ENCODE measurements at regions of chr1 and their contacts with region 1.

Region 1: DNA sequence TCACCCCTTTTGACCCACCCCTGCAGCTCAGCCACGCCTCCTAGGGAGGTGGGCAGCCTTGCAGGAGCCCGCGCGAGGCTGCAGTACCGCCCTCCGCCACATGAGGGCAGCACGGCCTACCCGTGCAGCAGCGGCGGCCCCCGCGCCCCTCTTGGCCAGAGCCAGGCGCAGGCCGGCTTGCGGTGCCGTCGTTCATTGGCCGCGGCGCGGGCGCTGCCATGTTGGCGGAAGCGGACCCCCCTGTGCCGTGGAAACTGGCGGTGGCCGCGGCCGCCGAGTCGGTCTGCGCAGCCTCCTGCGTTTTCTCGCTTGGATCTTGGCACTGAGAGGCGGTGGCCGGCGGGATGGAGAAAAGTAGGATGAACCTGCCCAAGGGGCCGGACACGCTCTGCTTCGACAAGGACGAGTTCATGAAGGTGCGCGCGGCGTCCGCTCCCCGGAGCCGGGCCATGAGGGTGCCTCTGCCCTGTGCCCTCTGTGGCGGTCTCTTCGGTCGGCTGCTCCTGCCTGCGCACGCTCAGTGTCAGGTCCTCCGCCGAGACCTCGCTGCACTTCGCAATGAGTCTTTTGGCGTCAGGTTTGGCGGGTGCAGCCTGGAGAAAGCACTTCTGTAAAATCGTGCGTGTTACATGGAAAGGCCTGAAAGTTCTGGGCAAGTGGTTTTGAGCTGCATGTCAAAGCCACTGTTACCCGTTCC is at the start of gene COG2:
- DNase-seq: peak; percentile 93
- H3K4me3 Mint-ChIP-seq: peak within 1 kb of the TSS; percentile 96
- H3K27ac Mint-ChIP-seq: peak within 1 kb of the TSS; percentile 95
- H3K4me1 Mint-ChIP-seq: peaks cover 35% of the 10 kb centered on the region
- H3K27me3 Mint-ChIP-seq: peaks cover 12% of the 10 kb centered on the region
- total RNA-seq, gene COG2: 46.3 and 46.4 TPM in 2 replicates

Region 2: GRCh38 chr1:229558571-229559335 is 1083.7 kb before region 1 on chr1 and contains the start of gene ABCB10:
- intact Hi-C with region 1: loop called (anchors 5 kb)
- DNase-seq: peak; percentile 81
- H3K4me3 Mint-ChIP-seq: peak within 1 kb of the TSS; percentile 90
- H3K27ac Mint-ChIP-seq: peak within 1 kb of the TSS; percentile 83
- H3K4me1 Mint-ChIP-seq: peaks cover 49% of the 10 kb centered on the region
- H3K27me3 Mint-ChIP-seq: no peaks in the 10 kb centered on the region
- total RNA-seq, gene ABCB10: 46.2 and 47.0 TPM in 2 replicates

Region 3: GRCh38 chr1:230426246-230427093 is 215.9 kb before region 1 on chr1 and contains the start of gene PGBD5:
- intact Hi-C with region 1: loop called (anchors 5 kb)
- DNase-seq: peak; percentile 59
- H3K4me3 Mint-ChIP-seq: peak within 1 kb of the TSS; percentile 78
- H3K27ac Mint-ChIP-seq: peak within 1 kb of the TSS; percentile 40
- H3K4me1 Mint-ChIP-seq: peaks cover 9% of the 10 kb centered on the region
- H3K27me3 Mint-ChIP-seq: peaks cover 53% of the 10 kb centered on the region
- total RNA-seq, gene PGBD5: not detected in 2 replicates

Region 4: DNA sequence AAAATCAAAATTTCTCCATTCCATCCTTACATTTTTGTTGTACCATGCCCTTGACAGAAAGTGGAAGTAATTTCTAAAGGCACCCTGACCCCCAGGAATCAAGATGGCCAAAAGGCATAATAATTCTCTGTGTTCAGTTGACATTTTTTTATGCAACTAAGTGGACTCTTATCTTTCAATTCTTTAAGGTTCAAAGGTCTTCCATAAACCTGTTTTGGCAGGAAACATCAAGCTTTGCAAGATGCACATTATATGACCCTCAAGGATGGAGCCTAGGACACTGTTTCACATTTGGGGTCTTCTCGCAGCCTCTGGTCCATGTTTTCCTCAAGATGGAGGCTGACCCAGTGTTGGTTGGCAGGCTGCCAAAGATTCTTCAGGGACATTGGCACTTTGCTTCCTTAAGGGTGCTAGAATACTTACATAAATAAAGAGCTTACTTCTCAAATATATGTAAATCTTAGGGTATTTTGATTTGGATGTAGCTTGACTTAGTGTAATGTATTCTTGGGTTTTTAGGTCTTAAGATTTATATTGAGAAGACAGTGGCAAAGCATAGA is 48.1 kb before region 1 on chr1:
- intact Hi-C with region 1: no loop called
- DNase-seq: no peak
- H3K4me3 Mint-ChIP-seq: no peak overlapping the region
- H3K27ac Mint-ChIP-seq: no peak overlapping the region
- H3K4me1 Mint-ChIP-seq: no peaks in the 10 kb centered on the region
- H3K27me3 Mint-ChIP-seq: no peaks in the 10 kb centered on the region

Region 5: DNA sequence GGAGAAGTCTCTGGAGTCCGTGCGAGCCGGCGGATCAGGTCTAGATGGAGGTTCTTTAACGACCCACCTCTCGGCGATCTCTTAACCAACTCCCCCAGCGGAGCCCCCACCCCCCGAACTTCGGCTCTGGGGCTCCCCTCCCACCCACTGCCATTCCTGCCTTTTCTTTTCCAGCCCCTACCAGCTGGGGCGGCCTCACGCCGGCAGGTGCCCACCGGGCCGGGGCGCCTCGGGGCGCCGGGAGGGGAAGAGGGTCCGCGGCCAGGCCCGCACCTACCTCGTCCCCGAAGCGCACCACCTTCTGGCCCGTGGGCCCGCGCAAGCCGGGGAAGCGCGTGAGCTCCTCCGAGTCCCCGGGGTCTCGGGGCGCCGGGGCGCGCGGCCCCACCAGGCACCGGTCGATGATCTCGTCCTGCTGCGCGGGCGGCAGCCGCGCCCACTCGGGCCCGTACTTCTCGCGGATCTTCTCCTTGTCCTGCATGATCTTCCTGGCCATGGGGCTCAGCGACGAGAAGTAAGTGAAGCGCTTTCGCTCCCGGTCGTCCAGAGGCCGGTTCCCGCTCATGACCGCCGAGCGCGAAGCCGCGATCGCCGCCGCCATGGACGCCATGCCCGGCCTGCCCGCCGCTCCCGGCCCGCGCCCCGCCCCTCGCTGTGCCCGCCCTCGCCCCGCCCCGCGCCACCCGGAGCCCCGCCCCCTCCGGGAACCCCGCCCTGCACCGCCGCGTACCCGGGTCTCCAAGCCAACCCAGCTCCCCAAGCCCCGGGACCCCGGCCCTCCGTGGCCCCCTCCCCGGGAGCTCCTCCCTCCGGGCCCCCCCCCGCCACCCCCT is 225.7 kb after region 1 on chr1 and contains the start of gene C1orf198:
- intact Hi-C with region 1: loop called (anchors 2 kb)
- DNase-seq: peak; percentile 59
- H3K4me3 Mint-ChIP-seq: peak within 1 kb of the TSS; percentile 87
- H3K27ac Mint-ChIP-seq: peak within 1 kb of the TSS; percentile 80
- H3K4me1 Mint-ChIP-seq: peaks cover 28% of the 10 kb centered on the region
- H3K27me3 Mint-ChIP-seq: peaks cover 39% of the 10 kb centered on the region
- total RNA-seq, gene C1orf198: 14.1 and 14.6 TPM in 2 replicates

Region 6: GRCh38 chr1:230978491-230979388 is 336.3 kb after region 1 on chr1 and contains the starts of genes ARV1 and TTC13:
- intact Hi-C with region 1: loop called (anchors 1 kb)
- DNase-seq: peak; percentile 97
- H3K4me3 Mint-ChIP-seq: peak within 1 kb of the TSS; percentile 92
- H3K27ac Mint-ChIP-seq: peak within 1 kb of the TSS; percentile 94
- H3K4me1 Mint-ChIP-seq: peaks cover 33% of the 10 kb centered on the region
- H3K27me3 Mint-ChIP-seq: no peaks in the 10 kb centered on the region
- total RNA-seq, gene ARV1: 14.3 and 14.6 TPM in 2 replicates
- total RNA-seq, gene TTC13: 20.7 and 21.8 TPM in 2 replicates

Region 7: GRCh38 chr1:231211005-231211857 is 568.8 kb after region 1 on chr1:
- intact Hi-C with region 1: loop called (anchors 1 kb)
- DNase-seq: peak; percentile 81
- H3K4me3 Mint-ChIP-seq: peak overlapping the region; percentile 82
- H3K27ac Mint-ChIP-seq: peak overlapping the region; percentile 66
- H3K4me1 Mint-ChIP-seq: peaks cover 9% of the 10 kb centered on the region
- H3K27me3 Mint-ChIP-seq: peaks cover 5% of the 10 kb centered on the region

Measured in activated T-helper 1 cell treated with anti-CD3 and anti-CD28 coated beads, Interleukin-12 subunit alpha, Interleukin-12 subunit beta, Interleukin-2, Interleukin-4 antibody, amounts not matched to agents 30 ng/mL and 10 ng/mL and 1 ng/mL, durations not matched to agents 14 hours and 24 hours and 36 hours (primary cell).